Activated CD4-positive, alpha-beta memory T cell treated with anti-CD3 and anti-CD28 coated beads, Interleukin-2, amount 10 ng/mL, durations not matched to agents 7 days and 5 days (primary cell): ENCODE measurements at regions of chr1 and their contacts with region 1.

Region 1: DNA sequence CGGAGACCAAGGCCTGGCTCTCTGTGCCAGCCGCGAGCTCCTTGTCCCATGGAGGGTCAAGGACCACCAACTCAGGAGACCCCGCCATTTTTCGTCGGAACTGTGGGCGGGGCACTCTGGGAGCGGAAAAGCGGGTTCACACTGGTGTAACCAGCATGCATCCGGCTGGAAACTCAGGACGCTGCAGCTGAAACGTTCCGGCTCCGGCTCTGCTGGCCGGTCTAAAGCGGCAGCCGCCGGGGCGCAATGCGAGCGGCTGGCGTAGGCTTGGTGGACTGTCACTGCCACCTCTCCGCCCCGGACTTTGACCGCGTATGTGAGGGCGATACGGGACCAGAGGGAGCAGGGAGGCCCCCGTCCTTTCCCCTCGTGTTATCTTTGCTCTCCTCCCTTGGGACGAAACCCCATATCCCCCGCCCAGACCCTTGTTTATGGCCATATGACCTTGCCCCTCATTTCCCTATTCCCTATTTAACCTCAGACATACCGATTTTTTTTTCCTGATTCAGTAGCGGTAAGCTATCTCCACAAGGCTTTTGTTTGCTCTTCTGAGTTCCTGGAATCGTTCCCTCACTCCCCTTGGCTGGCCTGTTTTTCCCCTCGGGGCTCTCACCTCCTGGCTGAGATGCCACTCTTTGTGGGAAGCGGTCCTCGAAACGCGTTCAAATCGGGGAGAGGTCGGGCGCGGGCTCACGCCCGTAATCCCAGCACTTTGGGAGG is at the starts of genes NSL1 and TATDN3:
- DNase-seq: peak; percentile 94
- H3K4me3 Mint-ChIP-seq: peak within 1 kb of the TSS; percentile 100
- H3K27ac Mint-ChIP-seq: peak within 1 kb of the TSS; percentile 95
- H3K4me1 Mint-ChIP-seq: peaks cover 49% of the 10 kb centered on the region
- H3K27me3 Mint-ChIP-seq: no peaks in the 10 kb centered on the region
- total RNA-seq, gene NSL1: 36.4 to 38.1 TPM
- total RNA-seq, gene TATDN3: 18.6 to 20.2 TPM

Region 2: GRCh38 chr1:212558693-212559480 is 232.9 kb before region 1 on chr1:
- CTCF ChIA-PET with region 1: no interaction called
- POLR2A ChIA-PET with region 1: interaction called, 11 read pairs
- DNase-seq: peak; percentile 94
- H3K4me3 Mint-ChIP-seq: peak overlapping the region; percentile 71
- H3K27ac Mint-ChIP-seq: peak overlapping the region; percentile 85
- H3K4me1 Mint-ChIP-seq: peaks cover 16% of the 10 kb centered on the region
- H3K27me3 Mint-ChIP-seq: peaks cover 35% of the 10 kb centered on the region

Region 3: GRCh38 chr1:212857992-212858460 is 66.2 kb after region 1 on chr1 and contains the start of gene FLVCR1:
- CTCF ChIA-PET with region 1: interaction called, 5 read pairs
- POLR2A ChIA-PET with region 1: interaction called, 14 read pairs
- DNase-seq: peak; percentile 97
- H3K4me3 Mint-ChIP-seq: no peak within 1 kb of the TSS
- H3K27ac Mint-ChIP-seq: peak within 1 kb of the TSS; percentile 92
- H3K4me1 Mint-ChIP-seq: peaks cover 32% of the 10 kb centered on the region
- H3K27me3 Mint-ChIP-seq: no peaks in the 10 kb centered on the region
- total RNA-seq, gene FLVCR1: 11.7 to 14.2 TPM

Region 4: DNA sequence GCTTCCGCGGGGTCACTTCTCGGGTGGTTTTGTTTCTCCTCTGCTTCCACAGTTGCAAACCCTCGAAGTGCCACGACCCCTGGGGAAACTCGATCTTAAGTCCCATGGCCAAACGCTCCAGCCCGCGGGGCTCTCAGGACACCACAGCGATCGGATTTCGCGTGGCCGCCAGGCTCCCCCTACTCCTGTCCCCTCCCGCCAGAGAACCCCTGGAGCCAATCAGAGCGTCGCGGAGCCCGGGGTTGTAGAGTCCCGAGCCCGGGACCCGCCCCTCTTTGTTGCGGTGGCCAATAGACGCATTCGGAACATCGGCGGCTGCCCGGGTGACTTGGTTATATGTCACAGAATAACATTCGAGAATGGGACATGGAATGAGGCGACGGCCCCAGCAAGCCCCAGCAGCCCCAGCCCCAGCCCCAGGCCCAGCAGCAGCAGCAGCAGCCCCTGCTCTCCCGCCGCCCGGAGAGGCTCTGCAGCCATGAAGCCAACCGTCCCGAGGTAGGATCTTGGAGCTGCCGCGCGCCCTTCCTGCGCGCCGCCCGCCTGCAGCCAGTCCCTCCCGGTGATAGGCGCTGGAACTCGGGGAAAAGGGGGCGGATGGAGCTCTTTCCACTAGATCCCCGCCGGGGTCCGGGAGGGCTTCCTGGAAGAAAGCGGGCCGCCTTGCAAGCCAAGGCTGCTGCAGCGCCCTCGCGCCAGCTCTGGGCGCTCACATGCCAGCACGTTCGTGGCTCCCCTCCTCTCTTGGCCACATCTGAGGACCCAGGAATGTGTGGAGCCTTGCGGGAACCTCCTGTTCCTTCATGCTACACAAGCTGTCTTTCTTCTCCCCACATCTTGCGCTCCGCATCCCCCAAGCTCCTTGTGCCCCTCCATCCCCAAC is 158.6 kb after region 1 on chr1 and contains the start of gene VASH2:
- CTCF ChIA-PET with region 1: no interaction called
- POLR2A ChIA-PET with region 1: interaction called, 10 read pairs
- DNase-seq: peak; percentile 73
- H3K4me3 Mint-ChIP-seq: peak within 1 kb of the TSS; percentile 74
- H3K27ac Mint-ChIP-seq: no peak within 1 kb of the TSS
- H3K4me1 Mint-ChIP-seq: peaks cover 13% of the 10 kb centered on the region
- H3K27me3 Mint-ChIP-seq: peaks cover 67% of the 10 kb centered on the region
- total RNA-seq, gene VASH2: 0.23 to 0.48 TPM